ENCODE measurements at regions of chr19 and their contacts with region 1.

Region 1: DNA sequence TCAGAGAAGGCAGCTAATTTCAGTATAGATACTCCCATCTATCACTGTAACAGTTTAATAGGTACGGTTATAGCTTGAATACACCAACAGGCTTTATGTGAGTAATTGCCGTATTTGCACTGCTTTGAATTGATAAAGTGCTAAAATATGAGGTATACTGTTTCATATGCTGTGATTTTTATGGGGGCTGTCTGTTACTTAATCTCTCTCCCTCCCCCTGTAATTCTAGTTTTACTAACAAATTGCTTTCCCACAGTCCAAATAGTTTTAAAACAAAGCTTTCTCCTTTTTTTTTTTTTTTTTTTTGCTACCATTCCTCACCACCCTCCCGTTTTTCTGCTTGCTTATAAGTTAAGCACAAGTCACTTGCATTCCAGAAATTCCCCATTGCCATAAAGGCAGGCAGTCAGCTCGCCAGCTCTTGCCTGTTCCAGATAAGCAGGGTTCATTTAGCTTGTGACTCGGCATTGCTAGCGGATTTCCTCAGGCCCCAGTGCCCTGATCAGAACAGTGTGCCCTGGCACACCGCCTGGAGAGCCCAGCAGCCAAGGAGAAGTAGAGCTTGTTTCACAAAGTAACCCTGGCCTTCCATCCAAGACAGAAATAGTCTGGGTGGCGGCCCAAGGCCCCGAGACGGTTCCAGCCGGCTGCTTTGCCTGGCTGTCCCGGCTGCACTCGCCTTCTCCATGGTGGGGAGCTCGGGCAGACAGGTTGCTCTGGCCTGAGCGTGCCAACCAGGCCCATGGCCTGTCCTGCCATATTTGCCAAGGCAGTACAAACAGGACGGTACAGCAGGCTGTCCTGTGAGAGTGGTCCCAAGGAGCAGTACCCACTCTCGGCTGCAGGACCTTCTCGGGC is 43.5 kb upstream of the NPAS1 start:
- DNase-seq: peak; percentile 61
- H3K4me3 Mint-ChIP-seq: peak overlapping the region; percentile 28
- H3K27ac Mint-ChIP-seq: peak overlapping the region; percentile 43
- H3K4me1 Mint-ChIP-seq: peaks cover 27% of the 10 kb centered on the region
- H3K27me3 Mint-ChIP-seq: no peaks in the 10 kb centered on the region
- CTCF ChIP-seq: no peak

Region 2: GRCh38 chr19:46932346-46932745 is 43.8 kb before region 1 on chr19:
- CTCF ChIA-PET with region 1: no interaction called
- POLR2A ChIA-PET with region 1: interaction called, 10 read pairs
- intact Hi-C with region 1: no loop called
- DNase-seq: peak; percentile 61
- H3K4me3 Mint-ChIP-seq: no peak overlapping the region
- H3K27ac Mint-ChIP-seq: no peak overlapping the region
- H3K4me1 Mint-ChIP-seq: peaks cover 20% of the 10 kb centered on the region
- H3K27me3 Mint-ChIP-seq: no peaks in the 10 kb centered on the region
- CTCF ChIP-seq: no peak